Left ventricle myocardium superior (tissue), 1 donor: ENCODE measurements at regions of chr7 and their contacts with region 1.

Region 1: GRCh38 chr7:22559829-22560489 is 60.0 kb upstream of the STEAP1B start:
- DNase-seq: peak; percentile 69
- ATAC-seq: peak; percentile 76

Region 2: DNA sequence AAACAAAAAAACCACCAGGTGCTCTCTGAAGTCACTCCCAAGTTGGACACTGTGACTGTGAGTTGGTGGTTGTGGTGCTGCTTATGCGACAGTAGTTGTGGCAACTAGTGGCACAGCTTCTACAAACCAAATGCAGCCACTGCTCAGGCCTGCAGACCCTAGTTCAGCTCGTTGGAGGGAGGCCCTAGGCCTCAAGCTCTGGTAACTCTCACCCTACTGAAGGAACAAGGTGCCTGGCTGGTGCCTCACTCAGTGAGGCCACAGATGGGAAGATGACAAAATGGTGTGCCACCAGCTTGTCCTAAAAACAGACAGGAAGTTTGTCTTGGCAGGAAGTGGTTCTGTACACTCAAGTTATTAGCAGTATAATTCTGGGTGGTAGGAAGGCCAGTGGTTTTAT is 157.7 kb before region 1 on chr7:
- intact Hi-C with region 1: no loop called
- DNase-seq: no peak
- ATAC-seq: no peak

Region 3: GRCh38 chr7:22542254-22542653 is 17.7 kb before region 1 on chr7:
- intact Hi-C with region 1: no loop called
- DNase-seq: no peak
- ATAC-seq: no peak

Region 4: GRCh38 chr7:22697876-22698606 is 138.1 kb after region 1 on chr7:
- intact Hi-C with region 1: no loop called
- DNase-seq: no peak
- ATAC-seq: no peak

Region 5: DNA sequence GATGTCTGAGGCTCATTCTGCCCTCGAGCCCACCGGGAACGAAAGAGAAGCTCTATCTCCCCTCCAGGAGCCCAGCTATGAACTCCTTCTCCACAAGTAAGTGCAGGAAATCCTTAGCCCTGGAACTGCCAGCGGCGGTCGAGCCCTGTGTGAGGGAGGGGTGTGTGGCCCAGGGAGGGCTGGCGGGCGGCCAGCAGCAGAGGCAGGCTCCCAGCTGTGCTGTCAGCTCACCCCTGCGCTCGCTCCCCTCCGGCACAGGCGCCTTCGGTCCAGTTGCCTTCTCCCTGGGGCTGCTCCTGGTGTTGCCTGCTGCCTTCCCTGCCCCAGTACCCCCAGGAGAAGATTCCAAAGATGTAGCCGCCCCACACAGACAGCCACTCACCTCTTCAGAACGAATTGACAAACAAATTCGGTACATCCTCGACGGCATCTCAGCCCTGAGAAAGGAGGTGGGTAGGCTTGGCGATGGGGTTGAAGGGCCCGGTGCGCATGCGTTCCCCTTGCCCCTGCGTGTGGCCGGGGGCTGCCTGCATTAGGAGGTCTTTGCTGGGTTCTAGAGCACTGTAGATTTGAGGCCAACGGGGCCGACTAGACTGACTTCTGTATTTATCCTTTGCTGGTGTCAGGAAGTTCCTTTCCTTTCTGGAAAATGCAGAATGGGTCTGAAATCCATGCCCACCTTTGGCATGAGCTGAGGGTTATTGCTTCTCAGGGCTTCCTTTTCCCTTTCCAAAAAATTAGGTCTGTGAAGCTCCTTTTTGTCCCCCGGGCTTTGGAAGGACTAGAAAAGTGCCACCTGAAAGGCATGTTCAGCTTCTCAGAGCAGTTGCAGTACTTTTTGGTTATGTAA is 167.5 kb after region 1 on chr7 and contains the start of gene IL6:
- intact Hi-C with region 1: loop called (anchors 2 kb)
- DNase-seq: peak; percentile 92
- ATAC-seq: peak; percentile 95
- total RNA-seq, gene IL6: 1.2 TPM

Region 6: GRCh38 chr7:22782616-22783232 is 222.8 kb after region 1 on chr7:
- intact Hi-C with region 1: loop called (anchors 2 kb)
- DNase-seq: peak; percentile 76
- ATAC-seq: peak; percentile 72

Region 7: DNA sequence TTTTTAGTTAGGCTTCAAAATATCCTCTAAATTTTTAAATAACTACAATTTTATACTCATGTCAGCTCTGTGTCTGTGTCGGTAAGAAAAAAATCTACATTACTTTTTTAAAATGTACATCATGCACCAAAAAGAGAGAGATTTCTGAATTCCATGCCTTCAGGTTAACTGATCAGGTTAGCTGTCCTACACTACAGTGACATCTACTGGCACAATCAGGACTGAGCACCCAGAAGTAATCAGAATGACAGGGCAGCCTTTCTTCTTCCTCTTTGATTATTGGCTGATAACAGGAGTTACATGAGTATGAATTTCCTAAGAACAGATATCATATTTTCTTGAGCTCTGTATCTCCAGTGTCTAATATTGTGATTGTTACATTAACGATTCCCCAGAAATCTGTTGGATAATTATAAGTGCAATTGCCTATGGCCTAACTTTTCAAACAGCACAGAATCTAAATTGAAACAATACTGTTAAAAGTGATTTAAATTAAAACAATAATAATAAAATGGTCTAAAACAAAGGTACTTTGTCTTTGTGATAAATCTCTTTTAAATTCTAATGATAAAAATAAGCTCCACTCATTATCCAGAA is 495.7 kb after region 1 on chr7:
- intact Hi-C with region 1: loop called (anchors 10 kb)
- DNase-seq: no peak
- ATAC-seq: peak; percentile 79